ENCODE measurements at regions of chr19 and their contacts with region 1.

Region 1: DNA sequence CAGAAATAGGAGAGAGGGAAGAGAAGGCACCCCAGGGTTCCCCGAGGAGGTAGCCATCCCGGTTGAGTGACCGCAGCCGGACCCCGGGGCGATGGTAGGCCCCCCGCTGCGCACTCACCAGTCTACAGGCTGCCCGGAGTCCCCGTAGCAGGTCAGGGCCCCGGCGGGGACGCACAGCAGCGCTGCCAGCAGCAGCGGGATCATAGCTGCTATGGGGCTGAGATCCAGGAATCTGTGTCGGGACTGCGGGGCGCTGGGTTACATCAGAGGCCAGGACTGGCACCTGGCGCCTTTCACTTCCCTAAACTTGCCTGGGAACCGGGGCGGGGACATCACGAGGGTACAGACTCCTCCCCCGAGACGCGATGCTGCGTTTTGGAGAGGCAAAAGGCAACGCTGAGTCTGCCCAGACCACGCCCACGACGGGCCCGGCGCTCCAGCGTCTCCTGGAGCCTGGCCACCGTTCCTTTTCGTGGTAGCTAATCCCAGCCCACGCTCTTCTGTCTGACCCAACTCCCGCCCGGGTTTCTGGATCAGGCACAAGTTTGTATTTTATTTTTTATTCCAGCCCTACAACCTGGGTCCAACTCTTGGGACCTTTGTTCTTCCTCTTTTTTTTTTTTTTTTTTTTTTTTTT is at the start of gene DNASE2:
- DNase-seq: peak; percentile 66
- ATAC-seq: peak; percentile 94
- H3K4me3 ChIP-seq: peak within 1 kb of the TSS; percentile 67 to 81
- H3K27ac ChIP-seq: peak within 1 kb of the TSS; percentile 67
- H3K4me1 ChIP-seq: no peaks in the 10 kb centered on the region
- H3K27me3 ChIP-seq: no peaks in the 10 kb centered on the region
- CTCF ChIP-seq: no peak
- total RNA-seq, gene DNASE2: 78.9 TPM

Region 2: DNA sequence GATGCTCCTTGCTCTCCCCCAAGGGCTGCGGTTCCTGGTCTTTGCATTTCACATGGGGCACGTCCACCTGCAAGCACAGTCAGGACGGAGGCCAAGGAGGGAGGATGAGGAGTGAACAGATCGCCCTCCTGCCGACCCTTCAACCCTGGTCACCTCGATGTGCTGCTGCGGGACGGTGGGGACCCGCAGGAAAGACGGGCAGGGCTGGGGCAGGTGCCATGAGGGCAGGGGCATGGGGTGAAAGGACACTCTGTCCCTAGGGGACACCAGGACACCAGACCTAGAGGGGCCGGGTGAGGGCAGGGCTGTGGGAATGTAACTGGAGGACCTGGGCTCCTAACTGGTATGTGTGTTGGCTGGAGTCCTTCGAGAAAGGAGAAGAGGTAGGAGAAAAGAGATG is 37.0 kb after region 1 on chr19:
- CTCF ChIA-PET with region 1: interaction called, 3 read pairs
- POLR2A ChIA-PET with region 1: interaction called, 15 read pairs
- in situ Hi-C with region 1: no loop called
- intact Hi-C with region 1: no loop called
- DNase-seq: no peak
- ATAC-seq: no peak
- H3K4me3 ChIP-seq: no peak overlapping the region
- H3K27ac ChIP-seq: no peak overlapping the region
- H3K4me1 ChIP-seq: no peaks in the 10 kb centered on the region
- H3K27me3 ChIP-seq: no peaks in the 10 kb centered on the region
- CTCF ChIP-seq: no peak